Colonic mucosa (tissue), 4 donors: ENCODE measurements at regions of chr7 and their contacts with region 1.

Region 1: DNA sequence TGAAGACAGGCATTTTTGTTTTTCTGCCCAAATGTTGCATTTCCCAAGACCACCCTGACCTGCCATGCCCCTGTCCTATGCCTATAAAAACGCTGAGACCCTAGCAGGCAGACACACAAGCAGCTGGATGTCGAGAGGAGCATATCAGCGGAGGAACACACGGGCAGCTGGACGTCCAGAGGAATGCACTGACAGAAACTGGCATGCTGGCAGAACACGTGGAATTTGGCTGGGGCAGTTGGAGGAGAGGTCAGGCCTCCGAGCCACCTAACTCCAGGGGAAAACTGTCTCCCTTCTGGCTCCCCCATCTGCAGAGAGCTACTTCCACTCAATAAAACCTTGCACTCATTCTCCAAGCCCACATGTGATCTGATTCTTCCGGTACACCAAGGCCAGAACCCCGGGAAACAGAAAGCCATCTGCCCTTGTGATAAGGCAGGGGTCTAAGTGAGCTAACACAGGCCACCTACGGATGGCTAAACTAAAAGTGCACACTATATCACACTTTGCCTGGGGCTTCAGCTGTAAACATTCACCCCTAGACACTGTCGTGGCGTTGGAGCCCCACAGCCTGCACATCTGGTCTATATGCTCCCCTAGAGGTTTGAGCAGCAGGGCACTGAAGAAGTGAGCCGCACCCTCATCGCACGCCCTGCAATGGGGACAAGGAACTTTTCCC is 10.0 kb upstream of the CDHR3 start:
- DNase-seq: no peak
- H3K4me3 ChIP-seq: no peak overlapping the region
- H3K27ac ChIP-seq: no peak overlapping the region
- H3K4me1 ChIP-seq: no peaks in the 10 kb centered on the region
- H3K27me3 ChIP-seq: no peaks in the 10 kb centered on the region
- CTCF ChIP-seq: no peak

Region 2: GRCh38 chr7:105625986-105626385 is 327.1 kb before region 1 on chr7:
- intact Hi-C with region 1: no loop called
- DNase-seq: no peak
- H3K4me3 ChIP-seq: no peak overlapping the region
- H3K27ac ChIP-seq: no peak overlapping the region
- H3K4me1 ChIP-seq: no peaks in the 10 kb centered on the region
- H3K27me3 ChIP-seq: no peaks in the 10 kb centered on the region
- CTCF ChIP-seq: no peak

Region 3: DNA sequence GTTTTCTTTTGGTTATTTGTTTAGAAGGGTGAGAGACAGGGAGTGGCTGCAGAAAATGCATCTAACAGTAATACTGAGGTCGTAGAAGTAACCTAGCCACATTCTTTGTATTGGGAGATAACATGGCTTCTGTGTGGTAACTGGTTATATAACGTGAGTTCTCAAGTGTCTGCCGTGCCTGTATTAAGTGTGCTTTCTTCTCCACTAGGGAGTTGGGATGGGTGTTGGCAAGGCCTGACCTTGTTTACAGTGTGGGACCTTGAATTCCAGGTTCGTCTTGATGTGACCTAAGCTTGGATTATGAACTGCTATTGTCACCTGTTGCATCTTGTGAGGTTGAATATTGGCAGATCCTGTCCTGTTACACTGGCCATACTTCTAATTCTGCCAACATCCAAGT is 477.0 kb after region 1 on chr7:
- intact Hi-C with region 1: loop called (anchors 5 kb)
- DNase-seq: no peak
- H3K4me3 ChIP-seq: no peak overlapping the region
- H3K27ac ChIP-seq: no peak overlapping the region
- H3K4me1 ChIP-seq: no peaks in the 10 kb centered on the region
- H3K27me3 ChIP-seq: no peaks in the 10 kb centered on the region
- CTCF ChIP-seq: no peak